AG04450 (cell line): ENCODE measurements at regions of chr19 and their contacts with region 1.

Region 1: DNA sequence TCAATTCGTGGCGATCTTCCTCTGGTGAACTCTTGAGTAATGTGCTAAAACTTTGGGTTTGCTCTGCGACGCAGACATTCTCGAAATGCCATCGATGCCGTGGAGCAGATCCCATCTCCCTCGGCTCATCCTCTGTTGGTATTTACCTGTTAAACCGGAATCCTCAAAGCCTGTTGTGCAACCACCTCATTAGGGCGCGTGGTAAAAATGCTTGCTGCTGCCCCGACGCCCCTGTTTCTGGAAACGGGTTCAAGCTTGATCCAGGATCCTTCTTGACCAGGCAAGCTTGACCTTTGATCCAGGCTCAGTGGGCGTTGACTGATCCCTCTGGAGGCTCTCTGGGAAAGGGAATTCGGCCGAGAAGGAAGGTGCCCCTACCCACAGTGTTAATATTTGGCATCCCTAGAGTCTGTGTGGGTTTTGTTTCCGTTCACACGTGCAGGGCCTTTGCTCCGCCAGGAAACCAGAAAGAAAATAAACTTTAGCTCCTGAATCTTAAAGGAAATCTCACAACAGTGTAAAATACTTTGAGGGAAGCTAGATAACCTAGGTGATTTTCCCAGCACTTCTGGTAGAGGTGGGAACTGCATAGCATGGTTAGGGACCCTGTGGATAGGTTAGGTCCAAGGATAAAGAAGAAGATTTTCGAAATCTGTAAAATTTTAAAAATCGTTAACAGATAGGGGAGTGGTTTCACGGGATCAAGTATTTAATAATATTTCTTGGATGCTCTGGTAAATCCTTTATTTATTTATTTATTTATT is 1.1 kb downstream of the LSM14A start:
- DNase-seq: no peak
- H3K4me3 ChIP-seq: peak overlapping the region; percentile 72
- H3K27ac ChIP-seq: peak overlapping the region; percentile 86
- H3K27me3 ChIP-seq: no peaks in the 10 kb centered on the region
- CTCF ChIP-seq: peak; percentile 18

Region 2: DNA sequence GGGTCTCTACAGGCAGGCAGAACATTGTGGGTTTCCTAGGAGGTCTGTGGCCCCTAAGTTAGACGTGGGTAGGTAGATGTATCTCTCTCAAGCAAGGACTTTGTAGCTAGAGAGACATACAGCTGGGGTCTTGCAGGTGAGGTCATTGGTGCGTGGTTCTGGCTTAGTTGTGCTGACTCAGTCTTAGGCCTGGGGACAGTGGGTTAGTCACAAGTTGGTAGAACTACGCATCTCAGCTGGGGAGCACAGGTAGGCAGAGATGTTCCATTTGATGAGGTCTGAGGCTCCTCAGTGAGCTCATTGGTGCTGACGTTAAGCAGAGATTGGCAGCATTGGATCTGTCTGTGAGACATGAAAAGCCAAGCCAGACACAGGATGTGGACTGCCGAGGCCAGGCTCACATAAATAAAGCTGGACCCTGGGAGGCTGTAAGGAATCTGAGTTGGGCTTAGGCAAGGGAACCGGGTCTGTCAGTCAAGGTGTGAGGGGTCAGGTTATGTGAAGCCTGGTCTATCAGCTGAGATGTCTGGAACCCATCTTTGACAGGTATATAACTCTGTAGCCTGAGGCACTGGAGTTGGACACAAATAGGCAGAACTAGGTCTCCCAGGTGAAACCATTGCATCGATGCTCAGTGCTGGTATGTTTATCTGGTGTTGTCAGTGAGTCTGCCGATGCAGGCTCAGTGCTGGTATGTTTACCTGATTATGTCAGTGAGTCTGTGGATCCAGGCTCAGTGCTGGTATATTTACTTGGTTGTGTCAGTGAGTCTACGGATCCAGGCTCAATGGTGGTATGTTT is 213.5 kb after region 1 on chr19:
- CTCF ChIA-PET with region 1: no interaction called
- POLR2A ChIA-PET with region 1: interaction called, 10 read pairs
- DNase-seq: no peak
- H3K4me3 ChIP-seq: no peak overlapping the region
- H3K27ac ChIP-seq: no peak overlapping the region
- H3K27me3 ChIP-seq: no peaks in the 10 kb centered on the region
- CTCF ChIP-seq: no peak

Region 3: DNA sequence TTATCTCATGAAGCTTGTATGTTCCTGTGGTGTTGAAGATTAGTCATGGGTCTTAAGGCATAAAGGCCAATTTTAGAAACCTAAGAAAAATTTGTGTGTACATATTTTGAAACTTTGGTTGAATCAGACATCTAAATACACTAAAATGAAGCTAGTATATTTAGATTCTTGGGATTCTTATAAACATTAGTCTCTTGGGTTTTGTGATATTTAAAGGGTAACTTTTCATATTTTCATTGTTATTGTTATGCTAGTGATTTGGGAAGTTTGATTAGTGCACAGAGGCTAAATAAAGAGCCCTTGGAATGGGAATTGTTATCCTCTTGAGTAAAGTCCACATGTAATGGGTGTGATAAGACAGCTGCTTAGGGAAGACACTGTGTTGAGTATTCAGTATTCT is 279.3 kb after region 1 on chr19:
- CTCF ChIA-PET with region 1: no interaction called
- POLR2A ChIA-PET with region 1: no interaction called
- DNase-seq: no peak
- H3K4me3 ChIP-seq: no peak overlapping the region
- H3K27ac ChIP-seq: no peak overlapping the region
- H3K27me3 ChIP-seq: no peaks in the 10 kb centered on the region
- CTCF ChIP-seq: no peak